ENCODE measurements at regions of chr7 and their contacts with region 1.

Region 1: DNA sequence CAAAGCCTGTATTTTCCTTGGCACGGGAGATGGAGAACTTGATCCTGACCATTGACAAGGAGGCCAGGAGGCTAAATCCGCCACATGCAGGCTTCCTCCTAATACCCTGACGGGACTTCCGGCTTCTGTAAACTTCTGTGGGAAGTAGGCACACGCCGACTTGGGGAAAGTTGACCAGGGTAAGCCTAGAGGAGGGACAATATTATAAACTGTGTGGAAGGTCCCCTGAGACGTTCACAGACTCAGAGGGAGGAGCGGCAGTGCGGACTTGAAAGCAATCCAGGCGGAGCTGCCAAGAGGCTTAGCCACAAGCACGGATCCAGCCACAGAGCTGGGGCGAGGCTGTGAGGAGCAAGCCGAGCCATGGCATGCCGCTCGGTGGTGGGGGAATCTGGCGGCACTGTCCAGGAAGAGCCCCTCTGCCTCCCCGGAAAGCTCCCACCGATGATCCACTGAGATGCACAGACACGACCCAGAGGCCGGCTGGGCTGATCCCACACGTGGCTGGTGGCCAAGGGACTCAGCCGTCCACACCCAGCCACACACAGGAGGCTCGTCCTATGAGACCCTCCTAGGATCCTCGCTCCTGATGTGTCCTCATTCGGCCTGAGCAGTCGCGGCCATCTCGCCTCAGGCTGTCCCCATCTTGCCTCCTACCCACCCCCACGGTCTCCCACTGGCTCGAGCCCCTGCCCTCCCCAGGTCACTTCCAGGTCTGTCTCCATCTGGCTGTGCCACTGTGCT is 40.0 kb upstream of the INSIG1 start:
- DNase-seq: peak; percentile 87
- ATAC-seq: peak; percentile 90

Region 2: GRCh38 chr7:155298834-155299534 is 41.3 kb after region 1 on chr7:
- intact Hi-C with region 1: loop called (anchors 2 kb)
- DNase-seq: peak; percentile 98
- ATAC-seq: peak; percentile 84